Aorta (tissue), 5 donors: ENCODE measurements at regions of chr16 and their contacts with region 1.

Region 1: DNA sequence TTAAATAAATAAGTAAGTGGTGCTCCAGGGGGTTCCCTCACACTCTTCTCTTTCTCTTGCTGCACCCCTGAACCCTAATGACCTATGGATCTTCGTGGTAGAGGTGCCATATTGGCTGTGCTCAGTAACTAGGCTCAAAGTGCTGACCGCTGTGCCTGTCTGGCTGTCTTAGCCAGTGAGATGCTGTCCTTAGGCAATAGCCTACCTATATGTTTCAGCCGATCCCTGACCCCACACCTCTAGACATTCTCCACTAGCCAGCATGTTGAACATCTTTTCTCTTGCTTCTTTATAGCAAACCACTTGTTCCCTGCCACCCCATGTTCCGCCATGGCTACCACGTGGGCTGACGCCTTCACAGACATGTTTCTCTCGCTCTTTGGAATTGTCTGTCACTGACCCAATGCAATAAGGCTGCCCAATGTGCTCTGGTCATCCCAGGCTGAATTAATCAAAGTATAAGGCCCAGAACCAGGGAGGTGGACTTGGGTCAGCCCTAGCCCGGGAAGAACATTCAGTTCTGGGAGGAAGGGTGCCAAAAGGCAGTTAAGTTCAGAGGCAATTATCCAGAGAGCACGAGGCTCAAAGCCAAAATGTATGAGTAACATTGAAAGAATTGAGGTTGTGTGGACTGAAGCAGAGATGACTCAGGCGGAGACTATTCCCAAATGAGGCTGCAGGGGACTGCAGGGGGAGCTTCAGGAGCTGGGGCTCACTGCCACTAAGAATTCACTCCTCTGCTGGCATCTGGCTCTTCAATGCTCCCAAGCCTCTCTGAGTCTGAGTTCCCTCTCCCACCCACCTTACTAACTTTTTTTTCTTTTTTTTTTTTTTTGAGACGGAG is 28.7 kb upstream of the TNRC6A start:
- DNase-seq: peak; percentile 83 to 85
- ATAC-seq: peak; percentile 95
- H3K4me3 ChIP-seq: no peak overlapping the region
- H3K27ac ChIP-seq: peak overlapping the region; percentile 96
- H3K4me1 ChIP-seq: peaks cover 0 to 4% of the 10 kb centered on the region in 2 donors
- H3K27me3 ChIP-seq: no peaks in the 10 kb centered on the region

Region 2: GRCh38 chr16:24737391-24737871 is 36.7 kb after region 1 on chr16:
- intact Hi-C with region 1: loop called in 1 of 2 experiments (anchors 5 kb)
- DNase-seq: no peak
- ATAC-seq: peak; percentile 77
- H3K4me3 ChIP-seq: peak overlapping the region in 1 of 2 donors; percentile 14
- H3K27ac ChIP-seq: peak overlapping the region in 1 of 2 donors; percentile 76
- H3K4me1 ChIP-seq: peaks cover 2 to 16% of the 10 kb centered on the region in 2 donors
- H3K27me3 ChIP-seq: no peaks in the 10 kb centered on the region

Region 3: DNA sequence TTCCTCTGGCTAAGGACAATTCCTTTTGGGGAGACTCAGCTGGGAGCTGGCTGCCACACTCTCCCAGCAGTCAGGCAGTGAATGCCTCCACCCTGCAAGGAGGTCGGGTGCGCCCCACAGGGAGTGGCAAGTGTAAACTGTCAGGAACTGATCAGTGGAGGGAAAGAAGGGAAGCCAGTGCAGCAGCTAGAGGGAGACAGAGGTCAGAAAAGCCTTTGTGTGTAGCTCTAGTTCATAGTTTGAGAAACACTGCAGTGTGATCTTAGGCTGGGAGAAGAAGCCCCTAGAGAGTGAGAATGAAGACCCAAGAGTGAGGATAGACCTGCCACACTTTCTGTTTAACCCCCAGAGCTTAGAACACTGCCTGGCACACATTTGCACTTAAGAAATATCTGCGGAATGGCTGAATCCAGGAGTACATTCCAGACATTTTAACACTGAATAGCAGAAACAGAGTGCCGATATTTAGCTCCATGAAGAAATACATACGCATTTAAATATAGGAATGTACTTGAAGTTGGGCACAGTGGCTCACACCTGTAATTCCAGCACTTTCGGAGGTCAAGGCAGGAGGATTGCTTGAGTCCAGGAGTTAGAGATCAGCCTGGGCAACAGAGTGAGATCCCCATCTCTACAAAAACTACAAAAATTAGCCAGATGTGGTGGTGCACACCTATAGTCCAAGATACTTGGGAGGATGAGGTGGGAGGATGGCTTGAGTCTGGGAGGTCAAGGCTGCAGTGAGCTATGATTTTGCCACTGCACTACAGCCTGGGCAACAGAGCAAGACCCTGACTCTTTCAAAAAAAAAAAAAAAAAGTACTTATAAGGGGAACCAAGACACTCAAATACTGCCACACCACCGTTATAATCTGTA is 133.9 kb after region 1 on chr16:
- intact Hi-C with region 1: no loop called
- DNase-seq: no peak
- ATAC-seq: no peak
- H3K4me3 ChIP-seq: no peak overlapping the region
- H3K27ac ChIP-seq: no peak overlapping the region
- H3K4me1 ChIP-seq: no peaks in the 10 kb centered on the region
- H3K27me3 ChIP-seq: no peaks in the 10 kb centered on the region